HAP-1 (cell line): ENCODE measurements at regions of chr1 and their contacts with region 1.

Region 1: GRCh38 chr1:36109041-36109679 is 15.9 kb downstream of the COL8A2 start:
- DNase-seq: no peak
- H3K4me3 ChIP-seq: no peak overlapping the region
- H3K4me1 ChIP-seq: no peaks in the 10 kb centered on the region
- H3K27me3 ChIP-seq: no peaks in the 10 kb centered on the region

Region 2: DNA sequence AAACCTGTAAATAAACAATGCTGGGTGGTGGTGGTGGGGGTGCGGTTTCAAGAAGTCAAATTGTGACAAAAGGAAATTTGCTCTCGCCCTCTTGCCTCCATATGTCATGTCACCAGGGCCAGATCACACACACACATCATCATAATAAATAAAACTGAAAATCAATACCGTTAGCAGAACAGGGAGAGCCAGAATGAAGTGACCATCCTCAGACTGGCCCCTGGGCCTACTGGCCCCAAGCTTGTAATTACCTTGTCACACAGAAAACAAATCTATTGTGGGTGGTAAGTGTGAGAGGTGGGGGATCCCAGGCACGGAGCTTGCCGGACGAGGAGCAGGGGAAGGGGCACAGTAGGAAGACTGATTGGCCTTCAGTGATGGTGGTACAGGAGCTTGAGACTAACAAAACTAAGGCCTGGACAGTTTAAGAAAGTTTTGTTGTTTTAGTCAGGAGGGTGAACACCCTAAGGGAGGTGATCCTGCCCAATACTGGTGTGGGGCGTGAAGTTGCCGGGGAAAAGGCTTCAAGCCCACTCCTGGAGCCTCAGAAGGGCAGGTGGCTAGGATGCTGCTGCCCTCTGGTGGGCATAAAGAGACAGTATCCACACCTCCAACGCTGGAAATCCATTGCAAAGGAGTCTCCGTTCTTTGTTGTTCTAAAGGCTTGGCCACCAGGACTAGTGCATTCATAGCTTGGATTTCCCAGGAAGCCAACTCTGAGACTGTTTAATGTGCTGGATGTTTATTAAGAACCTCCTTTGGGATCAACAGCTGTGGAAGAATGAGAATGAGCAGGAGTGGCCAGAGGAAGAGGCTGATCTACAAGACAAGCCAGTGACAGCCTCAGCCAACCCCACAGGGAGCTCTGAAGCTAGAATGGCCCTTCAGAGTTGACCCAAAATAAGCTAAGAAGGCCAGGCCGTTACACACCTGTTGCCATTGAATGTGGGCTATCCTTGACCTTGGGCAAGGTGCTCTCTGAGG is 382.4 kb before region 1 on chr1:
- in situ Hi-C with region 1: no loop called
- DNase-seq: peak; percentile 70 to 74
- H3K4me3 ChIP-seq: no peak overlapping the region
- H3K4me1 ChIP-seq: no peaks in the 10 kb centered on the region
- H3K27me3 ChIP-seq: no peaks in the 10 kb centered on the region

Region 3: GRCh38 chr1:36285448-36286101 is 176.4 kb after region 1 on chr1:
- in situ Hi-C with region 1: loop called (anchors 5 kb)
- DNase-seq: peak; percentile 72
- H3K4me3 ChIP-seq: no peak overlapping the region
- H3K4me1 ChIP-seq: no peaks in the 10 kb centered on the region
- H3K27me3 ChIP-seq: no peaks in the 10 kb centered on the region

Region 4: GRCh38 chr1:36385410-36386257 is 276.5 kb after region 1 on chr1 and contains the start of gene STK40:
- in situ Hi-C with region 1: no loop called
- DNase-seq: peak; percentile 98 to 99
- H3K4me3 ChIP-seq: peak within 1 kb of the TSS; percentile 91
- H3K4me1 ChIP-seq: peaks cover 22% of the 10 kb centered on the region
- H3K27me3 ChIP-seq: no peaks in the 10 kb centered on the region

Region 5: GRCh38 chr1:36420836-36421664 is 311.9 kb after region 1 on chr1:
- in situ Hi-C with region 1: loop called (anchors 5 kb)
- DNase-seq: peak; percentile 81 to 94
- H3K4me3 ChIP-seq: no peak overlapping the region
- H3K4me1 ChIP-seq: no peaks in the 10 kb centered on the region
- H3K27me3 ChIP-seq: no peaks in the 10 kb centered on the region